Endothelial cell of umbilical vein (primary cell): ENCODE measurements at regions of chr3 and their contacts with region 1.

Region 1: GRCh38 chr3:37855363-37855970 is 6.2 kb upstream of the CTDSPL start:
- DNase-seq: peak; percentile 77
- H3K4me3 ChIP-seq: no peak overlapping the region
- H3K27ac ChIP-seq: no peak overlapping the region
- H3K4me1 ChIP-seq: peaks cover 9% of the 10 kb centered on the region
- H3K27me3 ChIP-seq: no peaks in the 10 kb centered on the region
- CTCF ChIP-seq: peak; percentile 86 to 87
- POLR2A ChIP-seq: no peak

Region 2: GRCh38 chr3:37945807-37946530 is 90.5 kb after region 1 on chr3:
- CTCF ChIA-PET with region 1: interaction called, 11 read pairs
- POLR2A ChIA-PET with region 1: no interaction called
- dilution Hi-C with region 1: no loop called
- intact Hi-C with region 1: no loop called
- DNase-seq: peak; percentile 87
- H3K4me3 ChIP-seq: no peak overlapping the region
- H3K27ac ChIP-seq: peak overlapping the region; percentile 16
- H3K4me1 ChIP-seq: peaks cover 27% of the 10 kb centered on the region
- H3K27me3 ChIP-seq: no peaks in the 10 kb centered on the region
- CTCF ChIP-seq: no peak
- POLR2A ChIP-seq: peak; percentile 35

Region 3: GRCh38 chr3:37956723-37957528 is 101.5 kb after region 1 on chr3:
- CTCF ChIA-PET with region 1: interaction called, 11 read pairs
- POLR2A ChIA-PET with region 1: no interaction called
- dilution Hi-C with region 1: no loop called
- intact Hi-C with region 1: no loop called
- DNase-seq: peak; percentile 84
- H3K4me3 ChIP-seq: no peak overlapping the region
- H3K27ac ChIP-seq: peak overlapping the region; percentile 41
- H3K4me1 ChIP-seq: peaks cover 40% of the 10 kb centered on the region
- H3K27me3 ChIP-seq: no peaks in the 10 kb centered on the region
- CTCF ChIP-seq: no peak
- POLR2A ChIP-seq: no peak

Region 4: GRCh38 chr3:37986479-37987314 is 131.2 kb after region 1 on chr3:
- CTCF ChIA-PET with region 1: interaction called, 14 read pairs
- POLR2A ChIA-PET with region 1: no interaction called
- dilution Hi-C with region 1: no loop called
- intact Hi-C with region 1: no loop called
- DNase-seq: peak; percentile 39
- H3K4me3 ChIP-seq: no peak overlapping the region
- H3K27ac ChIP-seq: no peak overlapping the region
- H3K4me1 ChIP-seq: no peaks in the 10 kb centered on the region
- H3K27me3 ChIP-seq: no peaks in the 10 kb centered on the region
- CTCF ChIP-seq: no peak
- POLR2A ChIP-seq: no peak

Region 5: DNA sequence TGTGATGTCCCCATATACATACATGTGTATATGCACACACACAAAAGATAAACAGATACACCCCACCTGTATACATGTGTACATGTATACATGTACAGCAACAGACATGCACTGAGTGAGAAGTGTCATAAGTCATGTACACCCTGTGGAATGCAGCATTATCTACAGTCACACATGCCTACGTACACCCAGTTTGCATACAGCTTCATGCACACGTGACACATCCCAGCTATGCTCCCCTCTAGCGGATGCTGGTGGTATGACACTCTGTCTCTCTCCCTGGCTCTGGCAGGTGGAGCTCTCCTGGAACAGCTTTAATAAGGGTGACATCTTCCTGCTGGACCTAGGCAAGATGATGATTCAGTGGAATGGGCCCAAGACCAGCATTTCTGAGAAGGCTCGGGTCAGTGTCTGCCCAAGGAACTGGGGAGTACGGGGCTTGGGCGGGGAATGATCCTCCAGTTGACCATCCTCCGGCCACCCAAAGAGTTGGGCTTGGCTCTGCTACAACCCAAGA is 141.4 kb after region 1 on chr3:
- CTCF ChIA-PET with region 1: interaction called, 34 read pairs
- POLR2A ChIA-PET with region 1: no interaction called
- dilution Hi-C with region 1: no loop called
- intact Hi-C with region 1: loop called (anchors 1 kb)
- DNase-seq: peak; percentile 84
- H3K4me3 ChIP-seq: no peak overlapping the region
- H3K27ac ChIP-seq: no peak overlapping the region
- H3K4me1 ChIP-seq: peaks cover 15% of the 10 kb centered on the region
- H3K27me3 ChIP-seq: no peaks in the 10 kb centered on the region
- CTCF ChIP-seq: peak; percentile 90
- POLR2A ChIP-seq: no peak

Region 6: GRCh38 chr3:38004415-38005076 is 149.1 kb after region 1 on chr3:
- CTCF ChIA-PET with region 1: interaction called, 34 read pairs
- POLR2A ChIA-PET with region 1: no interaction called
- dilution Hi-C with region 1: no loop called
- intact Hi-C with region 1: loop called (anchors 1 kb)
- DNase-seq: peak; percentile 50
- H3K4me3 ChIP-seq: no peak overlapping the region
- H3K27ac ChIP-seq: no peak overlapping the region
- H3K4me1 ChIP-seq: no peaks in the 10 kb centered on the region
- H3K27me3 ChIP-seq: no peaks in the 10 kb centered on the region
- CTCF ChIP-seq: peak; percentile 50 to 72
- POLR2A ChIP-seq: no peak